ENCODE measurements at regions of chr17 and their contacts with region 1.

Region 1: GRCh38 chr17:4769628-4770027 is 2.1 kb upstream of the TM4SF5 start:
- DNase-seq: no peak
- ATAC-seq: no peak
- H3K4me3 ChIP-seq: no peak overlapping the region
- H3K4me3 Mint-ChIP-seq: no peak overlapping the region
- H3K27ac ChIP-seq: no peak overlapping the region
- H3K27ac Mint-ChIP-seq: no peak overlapping the region
- H3K4me1 ChIP-seq: peaks cover 0 to 11% of the 10 kb centered on the region in 2 experiments
- H3K4me1 Mint-ChIP-seq: peaks cover 7 to 9% (median 7%) of the 10 kb centered on the region in 3 donors
- H3K27me3 ChIP-seq: peaks cover 0 to 27% of the 10 kb centered on the region in 2 experiments
- H3K27me3 Mint-ChIP-seq: peaks cover 4 to 5% of the 10 kb centered on the region in 2 donors

Region 2: GRCh38 chr17:4643676-4644075 is 126.0 kb before region 1 on chr17:
- CTCF ChIA-PET with region 1: no interaction called
- POLR2A ChIA-PET with region 1: interaction called in 1 of 2 experiments, 13 read pairs
- DNase-seq: no peak
- ATAC-seq: no peak
- H3K4me3 ChIP-seq: no peak overlapping the region
- H3K4me3 Mint-ChIP-seq: no peak overlapping the region
- H3K27ac ChIP-seq: no peak overlapping the region
- H3K27ac Mint-ChIP-seq: no peak overlapping the region
- H3K4me1 ChIP-seq: peaks cover 0 to 16% of the 10 kb centered on the region in 2 experiments
- H3K4me1 Mint-ChIP-seq: peaks cover 7 to 17% (median 11%) of the 10 kb centered on the region in 3 donors
- H3K27me3 ChIP-seq: peaks cover 6 to 47% of the 10 kb centered on the region in 2 experiments
- H3K27me3 Mint-ChIP-seq: peaks cover 51 to 71% of the 10 kb centered on the region in 2 donors